ENCODE measurements at regions of chr20 and their contacts with region 1.

Region 1: GRCh38 chr20:19784511-19785172 is 26.6 kb downstream of the RIN2 start:
- DNase-seq: no peak
- H3K4me3 Mint-ChIP-seq: no peak overlapping the region
- H3K27ac Mint-ChIP-seq: no peak overlapping the region
- H3K4me1 Mint-ChIP-seq: peaks cover 13% of the 10 kb centered on the region
- H3K27me3 Mint-ChIP-seq: peaks cover 3% of the 10 kb centered on the region

Region 2: GRCh38 chr20:19828232-19828631 is 43.6 kb after region 1 on chr20:
- CTCF ChIA-PET with region 1: interaction called, 12 read pairs
- POLR2A ChIA-PET with region 1: no interaction called
- DNase-seq: peak; percentile 51
- H3K4me3 Mint-ChIP-seq: no peak overlapping the region
- H3K27ac Mint-ChIP-seq: peak overlapping the region; percentile 38
- H3K4me1 Mint-ChIP-seq: peaks cover 17% of the 10 kb centered on the region
- H3K27me3 Mint-ChIP-seq: peaks cover 5% of the 10 kb centered on the region